Tibial artery (tissue), 4 donors: ENCODE measurements at regions of chr15 and their contacts with region 1.

Region 1: GRCh38 chr15:88274553-88275460 is 18.3 kb upstream of the NTRK3 start:
- DNase-seq: peak; percentile 52 to 82
- H3K4me3 ChIP-seq: no peak overlapping the region
- H3K27ac ChIP-seq: no peak overlapping the region
- H3K4me1 ChIP-seq: no peaks in the 10 kb centered on the region
- H3K27me3 ChIP-seq: peaks cover 0 to 14% of the 10 kb centered on the region in 2 donors
- CTCF ChIP-seq: peak; percentile 92

Region 2: DNA sequence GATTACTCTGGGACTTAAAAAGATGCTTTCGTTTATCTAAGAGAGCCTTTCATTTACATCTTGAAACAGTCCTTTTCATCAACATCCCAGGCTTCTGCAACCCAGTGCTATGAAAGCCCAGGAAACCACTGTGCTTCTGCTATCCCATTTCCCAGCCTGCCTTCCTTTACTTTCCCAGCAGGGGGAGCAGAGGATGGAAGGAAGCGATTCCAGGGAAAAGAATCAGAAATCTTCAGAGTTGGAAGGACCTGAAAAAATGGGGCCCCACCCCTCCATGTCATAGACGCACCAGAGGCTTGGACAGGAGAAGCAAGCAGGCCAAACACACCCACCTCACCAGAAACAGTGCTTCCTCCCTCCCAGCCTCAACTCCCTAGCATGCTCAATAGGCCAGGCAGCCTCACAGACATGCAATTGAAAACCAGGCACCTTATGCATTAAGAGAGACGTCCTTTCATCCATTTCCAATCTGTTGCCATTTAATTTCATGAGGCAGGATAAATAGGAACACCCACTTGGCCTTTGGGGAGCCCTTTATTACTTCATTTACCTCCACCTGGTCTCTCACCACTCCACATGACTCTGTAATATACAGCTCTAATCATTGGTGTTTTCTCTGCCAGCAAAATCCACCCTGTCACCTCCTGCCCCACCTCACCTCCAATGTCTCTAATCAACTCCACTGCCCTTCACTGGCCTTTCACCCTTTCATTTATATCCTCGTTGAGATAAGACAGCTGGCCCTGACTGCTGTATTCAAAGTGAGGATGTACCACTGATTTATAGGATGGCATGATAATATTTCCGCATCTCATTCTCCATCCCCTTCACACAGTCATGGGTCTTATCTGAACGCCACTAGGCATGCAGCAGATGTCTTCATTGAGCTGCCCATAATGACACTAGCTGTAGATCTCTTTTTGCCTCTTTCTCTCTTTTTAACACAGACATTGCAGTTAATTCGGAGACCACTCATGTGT is 602.2 kb before region 1 on chr15:
- intact Hi-C with region 1: loop called (anchors 10 kb)
- DNase-seq: peak in 1 of 2 donors; percentile 29
- H3K4me3 ChIP-seq: no peak overlapping the region
- H3K27ac ChIP-seq: no peak overlapping the region
- H3K4me1 ChIP-seq: peaks cover 0 to 20% (median 0%) of the 10 kb centered on the region in 4 donors
- H3K27me3 ChIP-seq: no peaks in the 10 kb centered on the region
- CTCF ChIP-seq: peak; percentile 68 to 73

Region 3: DNA sequence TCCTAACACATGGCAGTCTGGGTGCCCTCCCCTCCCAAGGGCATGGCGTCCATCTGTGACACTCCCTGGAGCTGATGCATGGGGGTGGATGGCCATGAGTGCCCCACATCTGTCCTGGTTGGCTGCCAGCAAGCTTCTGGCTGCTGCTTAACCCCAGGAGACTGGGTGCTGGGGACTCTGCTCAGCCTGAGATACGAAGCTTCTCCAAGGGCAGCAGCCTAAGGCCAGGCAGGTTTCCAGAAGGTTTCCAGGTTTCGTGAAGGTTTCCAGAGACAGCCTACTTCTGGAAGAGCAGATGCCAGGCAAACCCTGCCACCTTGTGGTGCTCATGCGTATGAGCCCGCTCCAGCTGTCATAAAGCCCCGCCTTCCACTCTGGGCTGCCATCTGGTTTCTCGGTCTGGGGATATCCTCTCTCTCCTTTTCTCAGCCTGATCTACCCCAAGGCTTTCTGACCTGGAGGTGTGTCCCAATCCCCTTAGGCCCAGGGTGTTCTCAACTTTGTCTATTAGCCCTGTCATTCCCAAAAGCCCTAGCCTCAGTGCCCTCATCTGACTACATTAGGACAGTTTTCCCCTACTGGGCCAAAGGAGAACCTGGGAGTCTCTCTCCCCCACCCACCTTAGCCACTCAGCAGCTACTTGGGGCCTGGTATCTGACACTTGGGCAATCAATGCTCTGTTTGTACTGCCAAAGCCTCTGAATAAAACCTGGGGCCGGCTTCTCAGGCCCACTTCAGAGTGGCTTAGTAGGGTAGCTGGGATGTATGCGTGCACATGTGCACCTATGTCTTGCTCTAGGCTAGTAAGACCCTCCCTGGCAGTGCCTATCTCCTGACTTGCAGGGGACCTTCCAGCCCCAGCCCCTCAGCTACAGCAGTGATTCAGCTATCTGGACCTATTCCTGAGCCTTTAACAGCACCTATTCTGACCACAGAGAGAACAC is 180.3 kb after region 1 on chr15:
- intact Hi-C with region 1: loop called (anchors 10 kb)
- DNase-seq: no peak
- H3K4me3 ChIP-seq: no peak overlapping the region
- H3K27ac ChIP-seq: no peak overlapping the region
- H3K4me1 ChIP-seq: peaks cover 0 to 7% (median 3%) of the 10 kb centered on the region in 4 donors
- H3K27me3 ChIP-seq: no peaks in the 10 kb centered on the region
- CTCF ChIP-seq: peak; percentile 49 to 69

Region 4: DNA sequence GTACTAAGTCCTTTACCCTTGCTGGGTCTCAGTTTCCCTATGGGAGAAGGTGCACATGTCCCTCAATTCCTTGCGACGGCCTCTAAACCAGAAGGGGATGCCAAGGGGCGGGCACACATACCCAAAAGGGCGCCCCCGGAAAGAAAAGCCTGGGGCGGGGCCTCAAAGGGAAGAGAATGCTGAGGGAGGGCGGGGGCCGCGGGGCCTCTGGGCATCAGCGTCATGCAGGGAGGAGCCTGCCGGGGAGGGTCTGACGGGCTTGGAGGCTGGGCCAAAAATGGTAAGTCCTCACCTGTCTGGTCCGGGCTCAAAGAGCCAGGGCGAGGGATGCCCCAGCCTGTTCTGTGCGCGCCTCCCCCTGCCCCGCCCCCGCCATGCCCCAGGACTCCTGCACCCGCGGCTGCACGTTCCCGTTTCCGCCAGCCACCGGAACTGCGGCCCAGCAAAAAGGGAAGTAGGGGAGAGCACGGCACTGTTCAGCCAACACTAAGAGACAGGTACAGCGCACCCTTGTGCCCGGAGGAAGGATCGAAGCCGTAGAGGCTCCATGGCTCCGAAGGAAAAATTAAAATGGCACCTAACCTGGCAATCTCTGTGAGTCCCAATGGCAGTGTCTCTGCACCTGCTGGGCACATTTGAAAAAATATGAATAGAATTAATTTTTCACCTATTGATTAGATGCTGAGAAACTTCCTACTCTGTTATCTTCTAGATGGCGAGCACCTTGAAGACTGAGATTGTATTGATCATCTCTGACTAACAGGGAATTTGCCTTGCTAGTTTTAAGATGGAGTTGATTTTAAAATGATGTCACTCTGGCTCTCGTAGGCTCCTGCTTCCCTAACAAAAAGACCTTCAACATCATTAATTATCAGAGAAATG is 271.7 kb after region 1 on chr15 and contains the start of gene DET1:
- intact Hi-C with region 1: no loop called
- DNase-seq: peak; percentile 97
- H3K4me3 ChIP-seq: peak within 1 kb of the TSS; percentile 74 to 83
- H3K27ac ChIP-seq: peak within 1 kb of the TSS; percentile 79 to 80
- H3K4me1 ChIP-seq: peaks cover 0 to 13% (median 4%) of the 10 kb centered on the region in 4 donors
- H3K27me3 ChIP-seq: no peaks in the 10 kb centered on the region
- CTCF ChIP-seq: peak; percentile 51 to 75